Naive thymus-derived CD4-positive, alpha-beta T cell (primary cell): ENCODE measurements at regions of chr10 and their contacts with region 1.

Region 1: GRCh38 chr10:87094373-87095235 is at the starts of genes GLUD1 and SHLD2:
- DNase-seq: peak; percentile 78 to 94 (median 84)
- ATAC-seq: peak; percentile 81
- H3K4me3 ChIP-seq: peak within 1 kb of the TSS; percentile 74
- H3K4me3 Mint-ChIP-seq: peak within 1 kb of the TSS; percentile 89 to 97 (median 94)
- H3K27ac ChIP-seq: peak within 1 kb of the TSS; percentile 88
- H3K27ac Mint-ChIP-seq: peak within 1 kb of the TSS; percentile 89 to 97 (median 94)
- H3K4me1 ChIP-seq: peaks cover 12 to 27% of the 10 kb centered on the region in 2 donors
- H3K4me1 Mint-ChIP-seq: peaks cover 38 to 65% (median 52%) of the 10 kb centered on the region in 7 donors
- H3K27me3 ChIP-seq: no peaks in the 10 kb centered on the region
- H3K27me3 Mint-ChIP-seq: no peaks in the 10 kb centered on the region
- total RNA-seq, gene GLUD1: 70.2 to 98.1 (median 73.2) TPM
- total RNA-seq, gene SHLD2: 19.3 to 31.4 (median 21.1) TPM

Region 2: GRCh38 chr10:86411281-86411841 is 683.2 kb before region 1 on chr10:
- CTCF ChIA-PET with region 1: no interaction called
- POLR2A ChIA-PET with region 1: no interaction called
- intact Hi-C with region 1: loop called in 1 of 2 experiments (anchors 5 kb)
- DNase-seq: peak in 7 of 9 donors; percentile 22 to 38 (median 36)
- ATAC-seq: peak; percentile 70
- H3K4me3 ChIP-seq: peak overlapping the region; percentile 8
- H3K4me3 Mint-ChIP-seq: peak overlapping the region; percentile 62 to 83 (median 77)
- H3K27ac ChIP-seq: peak overlapping the region; percentile 42
- H3K27ac Mint-ChIP-seq: peak overlapping the region; percentile 84 to 94 (median 88)
- H3K4me1 ChIP-seq: peaks cover 20 to 48% of the 10 kb centered on the region in 2 donors
- H3K4me1 Mint-ChIP-seq: peaks cover 24 to 72% (median 57%) of the 10 kb centered on the region in 7 donors
- H3K27me3 ChIP-seq: no peaks in the 10 kb centered on the region
- H3K27me3 Mint-ChIP-seq: peaks cover 0 to 3% (median 0%) of the 10 kb centered on the region in 5 donors

Region 3: DNA sequence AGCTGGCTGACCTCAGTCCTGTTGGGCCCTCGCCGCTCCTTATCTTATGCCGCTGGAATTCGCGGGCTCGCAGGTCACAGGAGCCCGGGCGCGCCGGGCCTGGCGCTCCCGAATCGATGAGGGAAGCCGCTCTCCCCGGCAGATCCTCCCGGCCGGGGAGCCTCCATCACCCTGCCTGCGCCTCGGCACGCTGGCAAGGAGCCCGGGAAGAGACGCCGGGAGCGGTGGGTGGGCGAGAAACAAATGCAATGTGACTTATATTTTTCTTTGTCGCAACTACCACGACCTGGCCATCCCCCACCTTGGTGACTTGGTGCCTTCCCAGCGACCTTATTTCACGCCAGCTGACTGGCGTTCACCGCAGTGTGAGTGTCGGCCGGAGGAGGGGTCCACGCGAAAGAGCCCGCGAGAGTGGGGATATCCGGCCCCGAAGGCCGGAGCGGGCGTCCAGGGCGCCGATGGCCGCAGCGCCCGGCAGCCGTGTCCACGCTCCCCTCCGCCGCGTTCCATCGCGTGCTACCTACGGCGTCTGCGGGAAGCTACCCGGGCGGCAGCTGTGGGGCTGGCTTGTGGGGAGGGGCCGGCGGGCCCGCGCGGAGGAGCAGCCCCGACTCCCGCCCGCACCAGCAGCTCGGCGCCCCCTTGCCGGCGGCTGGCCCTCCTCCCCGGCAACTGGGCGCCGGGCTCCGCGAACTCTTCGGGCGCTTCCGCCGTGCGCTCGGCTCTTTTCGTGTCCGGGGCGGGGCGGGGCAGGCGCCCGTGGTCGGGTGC is 338.7 kb before region 1 on chr10:
- CTCF ChIA-PET with region 1: no interaction called
- POLR2A ChIA-PET with region 1: no interaction called
- intact Hi-C with region 1: loop called (anchors 1 to 2 kb)
- DNase-seq: peak; percentile 68 to 95 (median 82)
- ATAC-seq: peak; percentile 97
- H3K4me3 ChIP-seq: peak overlapping the region; percentile 73
- H3K4me3 Mint-ChIP-seq: peak overlapping the region; percentile 78 to 95 (median 86)
- H3K27ac ChIP-seq: peak overlapping the region; percentile 50
- H3K27ac Mint-ChIP-seq: peak overlapping the region in 4 of 9 donors; percentile 31 to 71 (median 50)
- H3K4me1 ChIP-seq: peaks cover 9 to 11% of the 10 kb centered on the region in 2 donors
- H3K4me1 Mint-ChIP-seq: peaks cover 13 to 47% (median 36%) of the 10 kb centered on the region in 7 donors
- H3K27me3 ChIP-seq: peaks cover 0 to 6% of the 10 kb centered on the region in 2 donors
- H3K27me3 Mint-ChIP-seq: peaks cover 24 to 52% (median 31%) of the 10 kb centered on the region in 5 donors

Region 4: GRCh38 chr10:86965986-86966654 is 128.5 kb before region 1 on chr10:
- CTCF ChIA-PET with region 1: interaction called, 3 read pairs
- POLR2A ChIA-PET with region 1: interaction called, 9 read pairs
- intact Hi-C with region 1: loop called (anchors 1 kb)
- DNase-seq: no peak
- ATAC-seq: peak; percentile 1
- H3K4me3 ChIP-seq: peak overlapping the region; percentile 38
- H3K4me3 Mint-ChIP-seq: peak overlapping the region; percentile 55 to 87 (median 80)
- H3K27ac ChIP-seq: peak overlapping the region; percentile 61
- H3K27ac Mint-ChIP-seq: peak overlapping the region; percentile 54 to 90 (median 67)
- H3K4me1 ChIP-seq: peaks cover 4 to 45% of the 10 kb centered on the region in 2 donors
- H3K4me1 Mint-ChIP-seq: peaks cover 10 to 47% (median 43%) of the 10 kb centered on the region in 7 donors
- H3K27me3 ChIP-seq: no peaks in the 10 kb centered on the region
- H3K27me3 Mint-ChIP-seq: peaks cover 0 to 22% (median 0%) of the 10 kb centered on the region in 5 donors

Region 5: DNA sequence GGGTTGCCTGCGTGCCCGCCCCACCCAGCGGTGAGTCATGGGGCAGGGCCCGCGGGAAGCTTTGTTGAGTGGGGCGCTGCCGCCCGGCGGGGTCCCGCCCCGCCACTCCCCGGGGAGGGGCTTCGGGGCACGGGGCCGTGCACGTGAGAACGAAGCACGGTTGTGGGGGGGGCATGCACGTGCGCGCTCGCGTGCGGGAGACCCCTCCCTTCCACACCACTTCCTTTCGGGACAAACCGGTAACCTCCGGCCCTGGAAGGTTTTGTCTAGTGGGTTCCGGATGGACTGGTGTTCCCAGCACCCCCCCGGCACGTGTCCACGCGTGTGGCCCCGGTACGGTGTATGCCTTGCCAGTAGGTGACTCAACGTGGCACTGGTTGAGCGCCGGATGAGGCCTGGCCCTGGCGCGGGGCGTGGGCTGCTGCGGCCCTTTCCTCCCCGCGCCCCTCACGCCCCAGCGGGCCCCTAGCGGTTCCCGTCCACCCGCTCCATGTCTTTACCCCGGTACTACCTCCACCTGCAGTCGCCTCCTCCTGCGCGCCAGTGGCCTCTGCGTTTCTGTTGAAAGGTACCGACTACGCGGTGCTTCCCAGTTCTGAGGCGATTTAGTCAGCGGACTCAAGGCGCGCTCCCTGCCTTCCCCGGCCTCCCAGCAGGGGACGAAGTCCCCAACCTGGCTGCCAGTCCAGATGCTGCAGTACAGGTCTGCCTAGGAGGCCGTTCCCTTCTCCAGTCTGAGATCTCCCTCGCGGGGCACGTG is 123.2 kb before region 1 on chr10:
- CTCF ChIA-PET with region 1: interaction called, 3 read pairs
- POLR2A ChIA-PET with region 1: interaction called, 9 read pairs
- intact Hi-C with region 1: loop called (anchors 1 kb)
- DNase-seq: peak; percentile 85 to 95 (median 90)
- ATAC-seq: peak; percentile 93
- H3K4me3 ChIP-seq: peak overlapping the region; percentile 78
- H3K4me3 Mint-ChIP-seq: peak overlapping the region; percentile 76 to 89 (median 84)
- H3K27ac ChIP-seq: peak overlapping the region; percentile 91
- H3K27ac Mint-ChIP-seq: peak overlapping the region; percentile 78 to 96 (median 92)
- H3K4me1 ChIP-seq: peaks cover 12 to 36% of the 10 kb centered on the region in 2 donors
- H3K4me1 Mint-ChIP-seq: peaks cover 19 to 47% (median 45%) of the 10 kb centered on the region in 7 donors
- H3K27me3 ChIP-seq: no peaks in the 10 kb centered on the region
- H3K27me3 Mint-ChIP-seq: peaks cover 0 to 49% (median 0%) of the 10 kb centered on the region in 5 donors

Region 6: GRCh38 chr10:87079106-87079836 is 15.3 kb before region 1 on chr10:
- CTCF ChIA-PET with region 1: interaction called, 4 read pairs
- POLR2A ChIA-PET with region 1: interaction called, 4 read pairs
- intact Hi-C with region 1: loop called in 1 of 2 experiments (anchors 1 kb)
- DNase-seq: no peak
- ATAC-seq: no peak
- H3K4me3 ChIP-seq: no peak overlapping the region
- H3K4me3 Mint-ChIP-seq: peak overlapping the region in 1 of 10 donors; percentile 23
- H3K27ac ChIP-seq: no peak overlapping the region
- H3K27ac Mint-ChIP-seq: no peak overlapping the region
- H3K4me1 ChIP-seq: peaks cover 0 to 18% of the 10 kb centered on the region in 2 donors
- H3K4me1 Mint-ChIP-seq: peaks cover 20 to 41% (median 31%) of the 10 kb centered on the region in 7 donors
- H3K27me3 ChIP-seq: no peaks in the 10 kb centered on the region
- H3K27me3 Mint-ChIP-seq: no peaks in the 10 kb centered on the region